Heart left ventricle (tissue), 16 donors: ENCODE measurements at regions of chr13 and their contacts with region 1.

Region 1: GRCh38 chr13:44393391-44393790 is 19.8 kb downstream of the SERP2 start:
- DNase-seq: no peak
- ATAC-seq: no peak
- H3K4me3 ChIP-seq: no peak overlapping the region
- H3K27ac ChIP-seq: no peak overlapping the region
- H3K4me1 ChIP-seq: peaks cover 0 to 19% (median 4%) of the 10 kb centered on the region in 12 donors
- H3K27me3 ChIP-seq: no peaks in the 10 kb centered on the region
- CTCF ChIP-seq: no peak
- POLR2A ChIP-seq: no peak

Region 2: DNA sequence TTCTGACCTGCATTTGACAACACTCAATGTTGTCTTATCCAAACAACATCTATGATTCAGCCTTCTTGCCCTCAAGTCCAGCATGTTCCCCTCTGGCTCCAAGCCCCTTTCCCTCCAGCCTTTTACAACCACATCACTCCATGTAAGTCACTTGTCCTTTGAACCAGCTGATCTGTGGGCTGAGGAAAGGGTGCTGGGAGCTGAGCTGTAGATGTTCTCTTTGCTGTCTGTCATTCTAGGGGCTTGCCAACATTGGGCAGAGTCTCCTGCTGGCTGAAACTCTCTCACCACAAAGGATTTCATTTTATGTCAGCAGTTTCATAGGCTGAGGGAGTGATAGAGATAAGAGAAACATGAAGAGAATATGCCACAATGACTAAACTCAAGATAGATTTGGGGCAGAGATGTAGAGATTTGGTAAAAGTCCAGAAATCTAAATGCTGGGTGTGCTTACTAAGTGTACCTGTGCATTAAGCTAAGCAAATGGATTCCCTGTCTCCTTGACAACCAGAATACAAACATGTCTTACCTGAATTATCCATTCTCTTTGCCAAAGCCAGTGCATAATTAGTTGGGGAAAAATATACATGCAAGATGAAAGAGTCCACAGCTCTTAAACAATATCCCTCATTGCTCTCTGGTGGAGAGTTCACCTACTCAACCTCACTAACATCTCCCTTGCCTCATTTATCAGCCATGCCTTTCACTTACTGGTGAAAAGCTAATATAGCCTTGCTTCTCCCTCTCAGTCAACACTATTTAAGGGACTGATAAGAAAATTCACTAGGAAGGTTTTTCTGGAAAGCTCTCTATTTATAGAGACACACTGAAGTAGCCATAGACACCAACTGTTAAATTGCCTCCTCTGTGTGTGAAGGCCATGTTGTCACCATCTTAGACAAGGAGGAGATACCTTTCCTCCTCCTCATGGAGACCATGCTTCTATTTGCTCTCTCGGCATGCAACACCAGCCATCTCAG is 195.3 kb before region 1 on chr13:
- intact Hi-C with region 1: no loop called
- DNase-seq: no peak
- ATAC-seq: peak in 3 of 4 donors; percentile 35 to 52 (median 36)
- H3K4me3 ChIP-seq: no peak overlapping the region
- H3K27ac ChIP-seq: no peak overlapping the region
- H3K4me1 ChIP-seq: peaks cover 0 to 23% (median 3%) of the 10 kb centered on the region in 12 donors
- H3K27me3 ChIP-seq: no peaks in the 10 kb centered on the region
- CTCF ChIP-seq: no peak
- POLR2A ChIP-seq: no peak

Region 3: GRCh38 chr13:44237276-44237767 is 156.1 kb before region 1 on chr13:
- intact Hi-C with region 1: no loop called
- DNase-seq: peak in 4 of 5 donors; percentile 81 to 86 (median 83)
- ATAC-seq: peak; percentile 98 to 99 (median 99)
- H3K4me3 ChIP-seq: peak overlapping the region in 1 of 12 donors; percentile 0
- H3K27ac ChIP-seq: peak overlapping the region; percentile 79 to 97 (median 88)
- H3K4me1 ChIP-seq: peaks cover 14 to 38% (median 26%) of the 10 kb centered on the region in 12 donors
- H3K27me3 ChIP-seq: no peaks in the 10 kb centered on the region
- CTCF ChIP-seq: no peak
- POLR2A ChIP-seq: peak in 1 of 2 donors; percentile 49

Region 4: DNA sequence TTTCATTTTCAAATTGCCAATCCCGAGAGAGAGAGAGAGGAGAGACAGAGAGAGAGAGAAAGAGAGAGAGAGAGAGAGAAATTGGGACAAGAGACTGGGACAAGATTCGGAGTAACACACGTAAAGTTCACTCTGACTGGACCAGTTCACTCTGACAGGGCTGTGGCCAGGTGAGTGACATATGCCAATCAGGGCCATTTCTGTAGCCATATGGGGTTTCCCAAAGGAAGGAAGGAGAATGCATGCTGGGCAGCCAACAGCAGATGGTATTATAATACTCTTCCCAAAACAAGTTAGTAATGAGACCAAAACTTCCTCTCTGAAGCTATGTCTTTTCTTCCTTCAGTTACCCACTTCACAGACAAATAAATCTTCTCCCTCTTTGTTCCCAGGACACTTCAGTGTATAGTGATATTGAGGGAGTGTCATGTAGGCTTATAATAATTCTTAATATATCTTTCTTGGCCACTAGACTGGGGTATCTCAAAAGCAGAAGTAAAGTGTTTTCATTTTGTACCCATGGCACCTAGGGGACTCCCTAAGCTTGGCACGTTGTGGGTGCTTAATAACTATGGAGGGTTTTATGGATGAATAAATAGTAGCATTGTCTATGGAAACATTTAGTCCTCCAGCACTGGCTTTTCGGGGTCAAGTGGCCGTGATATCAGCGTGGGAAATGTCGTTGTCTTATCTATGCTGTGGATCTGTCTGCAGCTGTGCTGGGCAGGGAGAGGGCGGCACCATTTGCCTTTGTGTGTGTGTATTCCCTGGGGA is 31.8 kb after region 1 on chr13:
- intact Hi-C with region 1: loop called in 7 of 10 experiments (anchors 5 kb)
- DNase-seq: no peak
- ATAC-seq: peak in 1 of 4 donors; percentile 27
- H3K4me3 ChIP-seq: no peak overlapping the region
- H3K27ac ChIP-seq: no peak overlapping the region
- H3K4me1 ChIP-seq: peaks cover 0 to 25% (median 3%) of the 10 kb centered on the region in 12 donors
- H3K27me3 ChIP-seq: no peaks in the 10 kb centered on the region
- CTCF ChIP-seq: no peak
- POLR2A ChIP-seq: no peak